Sigmoid colon (tissue), 7 donors: ENCODE measurements at regions of chrX and their contacts with region 1.

Region 1: GRCh38 chrX:102129473-102129872 is 4.0 kb downstream of the TCEAL2 start:
- DNase-seq: no peak
- H3K4me3 ChIP-seq: no peak overlapping the region
- H3K27ac ChIP-seq: no peak overlapping the region
- H3K4me1 ChIP-seq: peaks cover 0 to 8% (median 0%) of the 10 kb centered on the region in 4 donors
- H3K27me3 ChIP-seq: peaks cover 0 to 3% (median 0%) of the 10 kb centered on the region in 3 donors
- CTCF ChIP-seq: no peak
- EP300 ChIP-seq: no peak
- POLR2A ChIP-seq: no peak

Region 2: GRCh38 chrX:101931488-101932248 is 197.8 kb before region 1 on chrX and contains the start of gene ZMAT1:
- intact Hi-C with region 1: loop called (anchors 10 kb)
- DNase-seq: peak; percentile 97
- H3K4me3 ChIP-seq: peak within 1 kb of the TSS; percentile 57 to 84 (median 78)
- H3K27ac ChIP-seq: peak within 1 kb of the TSS; percentile 93 to 98 (median 95)
- H3K4me1 ChIP-seq: peaks cover 0 to 7% (median 0%) of the 10 kb centered on the region in 4 donors
- H3K27me3 ChIP-seq: peaks cover 0 to 3% (median 0%) of the 10 kb centered on the region in 3 donors
- CTCF ChIP-seq: no peak
- EP300 ChIP-seq: peak in 1 of 4 donors; percentile 22
- POLR2A ChIP-seq: peak; percentile 79 to 84
- total RNA-seq, gene ZMAT1: 7.9 to 13.5 (median 12.3) TPM

Region 3: DNA sequence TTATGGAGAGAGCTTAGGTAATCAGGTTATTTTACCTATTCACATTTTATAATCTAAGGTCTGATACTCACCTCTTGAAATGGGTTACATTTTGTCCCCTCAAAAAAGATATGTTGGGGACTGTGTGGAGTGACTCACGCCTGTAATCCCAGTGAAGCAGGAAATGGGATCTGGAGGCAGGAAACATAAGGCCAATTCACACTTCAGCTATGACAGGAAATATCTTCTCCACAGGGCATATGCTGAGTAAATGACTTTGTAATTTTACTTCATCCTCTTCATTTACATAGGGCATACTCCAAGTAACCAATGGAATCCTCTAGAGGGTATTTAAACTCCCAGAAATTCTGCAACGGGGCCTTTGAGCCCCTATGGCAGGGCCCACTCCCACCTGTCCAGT is 142.9 kb before region 1 on chrX:
- intact Hi-C with region 1: no loop called
- DNase-seq: no peak
- H3K4me3 ChIP-seq: no peak overlapping the region
- H3K27ac ChIP-seq: no peak overlapping the region
- H3K4me1 ChIP-seq: no peaks in the 10 kb centered on the region
- H3K27me3 ChIP-seq: no peaks in the 10 kb centered on the region
- CTCF ChIP-seq: no peak
- EP300 ChIP-seq: no peak
- POLR2A ChIP-seq: no peak